Activated CD4-positive, alpha-beta memory T cell treated with anti-CD3 and anti-CD28 coated beads, Interleukin-2, amount 10 ng/mL, durations not matched to agents 7 days and 5 days (primary cell): ENCODE measurements at regions of chr14 and their contacts with region 1.

Region 1: DNA sequence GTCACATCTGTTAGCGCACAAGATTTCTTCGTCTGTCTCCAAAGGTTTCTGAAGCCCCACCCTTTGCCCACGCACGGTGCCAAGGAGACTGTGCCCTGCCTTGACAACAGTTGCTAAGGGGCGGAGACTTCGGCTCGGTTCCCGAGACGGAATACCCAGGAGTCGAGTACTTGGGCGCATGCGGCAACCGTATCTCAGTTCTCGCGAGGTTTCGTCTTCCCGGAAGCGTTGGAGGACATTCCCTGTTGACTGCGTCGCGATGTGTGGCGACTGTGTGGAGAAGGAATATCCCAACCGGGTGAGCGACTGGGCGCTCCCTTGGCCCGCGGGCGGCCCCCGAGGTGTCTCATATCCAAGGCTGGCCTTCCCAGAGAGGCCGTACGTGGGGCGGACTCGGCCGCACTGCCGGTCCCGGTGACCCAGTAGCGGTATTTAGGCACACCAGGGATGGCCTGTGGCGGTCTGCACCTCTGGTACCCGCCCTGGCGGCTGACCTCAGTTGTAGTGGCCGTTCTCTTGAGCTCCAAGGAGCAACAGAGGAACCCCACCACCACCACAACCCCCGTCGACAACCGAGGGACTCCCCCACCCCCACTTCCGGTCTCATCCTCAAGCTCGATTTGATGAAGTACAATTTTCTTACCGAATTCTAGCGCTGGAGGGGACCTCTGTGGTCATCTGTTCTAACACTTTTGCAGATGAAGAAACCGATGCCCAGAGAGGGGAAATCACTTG is at the start of gene CHURC1:
- DNase-seq: peak; percentile 96
- H3K4me3 Mint-ChIP-seq: peak within 1 kb of the TSS; percentile 81
- H3K27ac Mint-ChIP-seq: peak within 1 kb of the TSS; percentile 84
- H3K4me1 Mint-ChIP-seq: peaks cover 37% of the 10 kb centered on the region
- H3K27me3 Mint-ChIP-seq: peaks cover 10% of the 10 kb centered on the region
- total RNA-seq, gene CHURC1: 80.6 to 91.1 TPM

Region 2: GRCh38 chr14:64928239-64929013 is 14.0 kb after region 1 on chr14:
- CTCF ChIA-PET with region 1: interaction called, 15 read pairs
- POLR2A ChIA-PET with region 1: interaction called, 60 read pairs
- DNase-seq: no peak
- H3K4me3 Mint-ChIP-seq: no peak overlapping the region
- H3K27ac Mint-ChIP-seq: no peak overlapping the region
- H3K4me1 Mint-ChIP-seq: peaks cover 21% of the 10 kb centered on the region
- H3K27me3 Mint-ChIP-seq: no peaks in the 10 kb centered on the region

Region 3: DNA sequence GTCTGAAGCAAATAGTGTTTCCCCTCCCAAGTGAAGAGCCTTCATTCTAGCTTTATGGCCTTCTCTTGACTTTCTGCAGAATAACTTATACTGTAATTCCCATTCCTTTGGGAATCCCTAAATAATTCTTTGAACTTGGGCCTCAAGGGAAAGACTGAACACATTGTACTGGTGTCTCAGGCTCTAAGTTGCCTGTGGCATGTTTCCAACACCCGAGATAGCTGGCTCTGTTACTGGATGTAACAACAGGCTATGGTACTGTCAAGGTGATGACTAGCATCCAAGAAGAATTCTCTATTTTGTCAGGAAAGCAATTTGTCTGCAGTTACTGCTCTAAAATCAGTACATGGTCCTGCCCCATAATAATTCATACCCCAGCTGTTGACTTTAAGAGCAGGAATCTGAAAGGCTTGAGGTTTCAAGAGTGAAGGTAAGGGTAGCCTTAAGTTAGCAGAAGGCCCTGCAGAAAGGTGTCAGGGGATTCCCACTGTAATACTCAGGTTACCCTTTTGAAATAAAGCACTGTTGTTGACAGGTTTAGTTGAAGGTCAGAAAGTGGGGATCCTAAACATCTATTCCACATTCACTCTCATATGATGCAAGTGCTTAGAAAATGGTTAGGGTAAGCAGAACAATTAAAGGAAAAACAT is 22.9 kb after region 1 on chr14:
- CTCF ChIA-PET with region 1: no interaction called
- POLR2A ChIA-PET with region 1: interaction called, 11 read pairs
- DNase-seq: no peak
- H3K4me3 Mint-ChIP-seq: no peak overlapping the region
- H3K27ac Mint-ChIP-seq: no peak overlapping the region
- H3K4me1 Mint-ChIP-seq: peaks cover 26% of the 10 kb centered on the region
- H3K27me3 Mint-ChIP-seq: no peaks in the 10 kb centered on the region